Psoas muscle (tissue), 8 donors: ENCODE measurements at regions of chr6 and their contacts with region 1.

Region 1: DNA sequence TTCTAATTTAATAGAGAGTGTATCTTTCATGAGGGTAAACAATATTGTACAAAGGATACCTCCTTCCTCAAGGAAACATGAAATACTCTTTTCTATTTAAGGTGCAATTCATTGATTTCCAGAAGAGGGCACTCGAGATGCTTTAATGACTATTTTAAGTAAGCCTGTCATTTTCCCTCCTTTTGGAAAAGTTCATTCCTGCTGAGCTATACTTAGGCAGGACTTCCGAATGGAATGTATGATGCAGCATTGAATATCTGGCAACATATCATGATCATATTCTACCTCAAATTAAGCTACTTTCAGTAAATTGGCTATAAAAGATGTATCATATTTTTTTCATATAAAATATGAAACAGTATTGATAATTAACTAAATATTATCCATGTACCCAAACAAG is 5.0 kb downstream of the DST start:
- DNase-seq: no peak
- ATAC-seq: peak; percentile 64 to 81 (median 71)
- H3K4me3 ChIP-seq: no peak overlapping the region
- H3K27ac ChIP-seq: peak overlapping the region; percentile 14
- H3K4me1 ChIP-seq: peaks cover 8% of the 10 kb centered on the region
- H3K27me3 ChIP-seq: no peaks in the 10 kb centered on the region
- CTCF ChIP-seq: peak; percentile 72

Region 2: DNA sequence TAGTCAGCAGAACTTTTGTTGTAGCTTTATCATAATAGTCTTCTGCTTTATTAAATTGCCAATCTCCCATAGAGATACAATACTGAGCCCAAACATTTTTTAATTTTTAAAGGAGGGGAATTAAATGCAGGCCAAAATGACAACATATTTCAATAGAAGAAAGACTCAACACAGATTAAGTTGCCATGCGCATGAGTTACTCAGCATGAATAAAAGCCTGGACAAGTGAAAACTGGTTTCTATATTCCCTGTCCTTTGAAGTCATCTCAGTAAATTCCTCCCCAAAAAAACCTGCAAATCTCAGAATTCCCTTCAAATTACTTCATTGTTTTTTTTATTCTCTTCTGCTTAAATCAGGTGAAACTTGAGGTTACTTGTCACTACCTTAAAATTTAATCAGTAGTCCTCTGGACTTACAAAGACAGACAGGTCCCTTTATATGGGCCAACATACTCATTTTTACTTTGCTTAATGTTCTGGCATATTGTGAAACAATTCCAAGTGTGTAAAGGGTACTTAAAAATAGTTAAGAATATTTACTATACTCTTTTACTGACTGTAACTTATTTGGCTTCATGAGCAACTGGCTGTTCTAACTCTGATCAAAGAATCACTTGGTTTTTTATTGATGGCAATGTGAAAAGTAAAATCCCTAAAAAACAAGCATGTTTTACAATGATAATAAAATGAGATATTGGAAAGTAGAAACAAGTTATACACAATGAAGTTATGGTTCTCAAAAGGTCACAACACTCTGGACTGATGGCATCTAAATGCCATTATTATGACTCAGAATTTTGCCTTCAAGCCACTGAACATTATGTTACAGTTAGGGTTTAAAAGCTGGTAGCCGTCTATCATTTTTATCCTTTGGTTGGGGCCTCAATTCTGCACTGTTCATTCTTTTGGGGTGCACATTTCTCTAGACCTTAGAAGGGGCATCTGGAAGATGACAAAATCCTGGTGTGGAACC is 340.3 kb before region 1 on chr6:
- intact Hi-C with region 1: no loop called
- DNase-seq: no peak
- ATAC-seq: no peak
- H3K4me3 ChIP-seq: no peak overlapping the region
- H3K27ac ChIP-seq: no peak overlapping the region
- H3K4me1 ChIP-seq: no peaks in the 10 kb centered on the region
- H3K27me3 ChIP-seq: no peaks in the 10 kb centered on the region
- CTCF ChIP-seq: no peak

Region 3: DNA sequence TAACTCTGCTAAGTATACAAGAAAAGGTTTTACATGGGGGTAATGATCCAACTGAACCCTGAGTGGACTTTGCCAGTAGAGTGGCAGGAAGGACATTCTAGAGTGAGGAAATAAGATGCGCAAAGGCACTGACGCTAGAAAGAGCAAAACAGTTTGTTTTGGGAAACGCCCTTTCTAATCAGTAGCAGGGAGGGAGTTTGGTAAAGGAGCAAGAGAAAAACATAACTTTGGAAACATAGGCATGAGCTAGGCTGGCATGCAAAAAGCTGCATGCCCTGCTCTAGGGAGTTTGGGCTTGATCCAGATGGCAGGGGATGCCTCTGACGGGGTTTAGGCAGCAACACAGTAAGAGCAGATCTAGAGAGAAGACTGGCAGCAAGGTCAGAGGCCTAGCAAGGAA is 130.1 kb before region 1 on chr6:
- intact Hi-C with region 1: no loop called
- DNase-seq: no peak
- ATAC-seq: peak in 2 of 4 donors; percentile 53 to 62
- H3K4me3 ChIP-seq: no peak overlapping the region
- H3K27ac ChIP-seq: no peak overlapping the region
- H3K4me1 ChIP-seq: peaks cover 18% of the 10 kb centered on the region
- H3K27me3 ChIP-seq: no peaks in the 10 kb centered on the region
- CTCF ChIP-seq: no peak

Region 4: DNA sequence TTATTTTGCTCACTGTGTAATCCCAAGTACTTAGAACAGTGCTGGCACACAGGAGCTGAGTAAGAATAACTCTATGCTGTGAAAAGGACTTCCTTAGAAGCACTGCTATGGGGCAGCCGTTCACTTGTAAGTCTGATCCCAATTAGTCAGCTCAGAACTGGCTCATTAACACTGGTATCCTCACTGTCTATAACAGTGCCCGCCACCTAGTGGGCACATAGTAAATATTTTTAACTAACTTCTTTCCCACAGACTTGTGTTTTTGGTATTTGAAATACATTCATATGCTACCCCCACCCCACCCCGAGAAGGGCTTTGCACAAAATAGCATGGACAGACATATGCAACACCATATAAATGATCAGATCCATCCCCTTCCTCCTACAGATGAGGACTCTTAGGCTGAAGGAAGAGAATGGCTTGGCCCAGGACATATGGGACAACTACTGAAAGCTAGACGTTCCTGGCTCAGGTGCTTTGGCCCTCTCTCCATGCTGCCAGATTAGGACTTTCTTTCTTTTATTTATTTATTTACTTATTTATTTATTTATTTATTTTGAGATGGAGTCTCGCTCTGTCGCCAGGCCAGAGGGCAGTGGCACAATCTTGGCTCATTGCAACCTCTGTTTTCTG is 42.0 kb before region 1 on chr6:
- intact Hi-C with region 1: loop called in 1 of 2 experiments (anchors 5 kb)
- DNase-seq: no peak
- ATAC-seq: peak in 3 of 4 donors; percentile 57 to 76 (median 65)
- H3K4me3 ChIP-seq: no peak overlapping the region
- H3K27ac ChIP-seq: no peak overlapping the region
- H3K4me1 ChIP-seq: no peaks in the 10 kb centered on the region
- H3K27me3 ChIP-seq: no peaks in the 10 kb centered on the region
- CTCF ChIP-seq: peak; percentile 54

Region 5: DNA sequence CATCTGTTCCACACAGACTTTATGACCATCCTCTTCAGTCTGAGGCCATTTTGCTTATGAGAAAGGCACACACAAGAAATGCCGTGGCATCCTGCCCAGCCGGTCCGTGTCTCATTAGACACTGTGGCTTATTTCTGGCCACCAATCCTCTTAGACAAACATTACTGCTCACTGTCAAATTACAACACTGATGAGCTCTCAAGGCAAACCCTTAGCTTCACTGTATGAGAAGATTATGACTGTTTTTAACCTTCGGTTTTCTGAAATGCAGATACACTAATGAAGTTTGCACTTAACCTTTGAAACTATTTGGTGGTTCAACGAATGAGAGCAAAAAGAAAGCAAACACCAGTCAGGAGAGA is 55.6 kb after region 1 on chr6:
- intact Hi-C with region 1: loop called (anchors 2 to 5 kb)
- DNase-seq: peak; percentile 90 to 95
- ATAC-seq: peak; percentile 80 to 91 (median 88)
- H3K4me3 ChIP-seq: peak overlapping the region; percentile 63
- H3K27ac ChIP-seq: peak overlapping the region; percentile 91
- H3K4me1 ChIP-seq: peaks cover 40% of the 10 kb centered on the region
- H3K27me3 ChIP-seq: no peaks in the 10 kb centered on the region
- CTCF ChIP-seq: no peak

Region 6: DNA sequence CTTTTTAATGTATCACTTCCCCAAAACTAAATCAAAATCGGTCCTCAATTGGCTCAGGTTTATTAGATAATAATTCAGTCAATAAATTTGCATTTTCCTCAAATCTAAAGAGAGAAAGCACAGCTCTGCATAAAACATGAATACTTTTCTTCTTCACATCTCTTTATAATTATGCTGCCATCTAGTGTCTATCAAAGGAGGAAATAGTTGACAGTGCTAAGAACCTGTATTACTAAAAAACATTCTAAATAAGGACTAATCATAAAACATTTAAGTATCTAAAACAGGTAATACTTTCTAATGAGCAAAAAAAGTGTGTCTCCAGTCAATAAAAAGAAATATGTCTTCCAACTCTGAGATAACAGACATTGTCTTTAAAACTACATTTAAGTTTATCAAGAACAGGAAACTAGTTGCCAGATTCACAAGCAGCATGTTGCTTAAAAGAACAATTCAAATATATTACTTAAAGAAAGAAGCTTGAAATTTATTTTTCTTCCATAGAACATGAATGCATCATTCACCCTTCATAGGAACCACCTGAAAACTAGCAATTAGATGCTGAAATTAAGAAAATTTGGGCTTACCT is 61.5 kb after region 1 on chr6:
- intact Hi-C with region 1: loop called (anchors 2 to 5 kb)
- DNase-seq: no peak
- ATAC-seq: peak; percentile 54 to 81 (median 66)
- H3K4me3 ChIP-seq: no peak overlapping the region
- H3K27ac ChIP-seq: no peak overlapping the region
- H3K4me1 ChIP-seq: peaks cover 27% of the 10 kb centered on the region
- H3K27me3 ChIP-seq: no peaks in the 10 kb centered on the region
- CTCF ChIP-seq: peak; percentile 64

Region 7: GRCh38 chr6:56851541-56852259 is 214.1 kb after region 1 on chr6:
- intact Hi-C with region 1: loop called (anchors 5 kb)
- DNase-seq: peak in 1 of 2 donors; percentile 22
- ATAC-seq: peak; percentile 80 to 94 (median 90)
- H3K4me3 ChIP-seq: peak overlapping the region; percentile 63
- H3K27ac ChIP-seq: peak overlapping the region; percentile 34
- H3K4me1 ChIP-seq: peaks cover 18% of the 10 kb centered on the region
- H3K27me3 ChIP-seq: no peaks in the 10 kb centered on the region
- CTCF ChIP-seq: peak; percentile 65